ENCODE measurements at regions of chr22 and their contacts with region 1.

Region 1: GRCh38 chr22:39532215-39533071 is at the start of gene RPS19BP1:
- DNase-seq: peak; percentile 99 to 100 (median 99)
- ATAC-seq: peak; percentile 87 to 89
- H3K4me3 ChIP-seq: peak within 1 kb of the TSS; percentile 70
- H3K27ac ChIP-seq: peak within 1 kb of the TSS; percentile 79
- H3K4me1 ChIP-seq: peaks cover 7% of the 10 kb centered on the region
- H3K27me3 ChIP-seq: no peaks in the 10 kb centered on the region
- total RNA-seq, gene RPS19BP1: 55.1 to 75.5 (median 61.8) TPM

Region 2: GRCh38 chr22:39319270-39320022 is 213.0 kb before region 1 on chr22 and contains the start of gene RPL3:
- intact Hi-C with region 1: loop called in 1 of 4 experiments (anchors 5 kb)
- DNase-seq: peak; percentile 96 to 99 (median 99)
- ATAC-seq: peak; percentile 91 to 92
- H3K4me3 ChIP-seq: peak within 1 kb of the TSS; percentile 79
- H3K27ac ChIP-seq: peak within 1 kb of the TSS; percentile 99
- H3K4me1 ChIP-seq: peaks cover 11% of the 10 kb centered on the region
- H3K27me3 ChIP-seq: no peaks in the 10 kb centered on the region
- total RNA-seq, gene RPL3: 948 to 1,416 (median 984) TPM

Region 3: DNA sequence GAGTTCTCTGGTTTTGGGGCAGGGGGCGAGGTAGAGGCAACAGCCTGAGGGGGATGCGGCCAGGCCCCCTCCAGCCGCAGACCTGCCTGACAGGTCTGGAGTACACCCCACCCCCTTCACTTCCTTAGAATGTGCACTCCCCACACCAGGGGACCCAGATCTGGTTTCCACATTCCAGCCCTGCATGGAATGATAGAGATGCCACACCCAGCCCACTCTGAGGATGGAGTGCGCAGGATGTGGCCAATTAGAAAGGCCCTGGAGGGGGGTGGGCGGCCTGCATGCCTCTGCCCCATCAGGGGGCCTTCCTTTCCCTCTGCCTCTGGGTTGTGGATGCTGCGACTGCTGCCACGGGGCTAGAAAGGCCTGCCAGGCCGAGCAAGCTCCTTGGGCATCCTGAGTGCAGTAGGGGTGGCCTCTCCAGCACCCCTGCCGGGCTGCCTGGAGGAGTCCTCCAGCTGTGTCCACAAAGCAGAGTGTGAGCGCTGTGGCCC is 103.8 kb before region 1 on chr22:
- intact Hi-C with region 1: no loop called
- DNase-seq: no peak
- ATAC-seq: no peak
- H3K4me3 ChIP-seq: no peak overlapping the region
- H3K27ac ChIP-seq: no peak overlapping the region
- H3K4me1 ChIP-seq: peaks cover 9% of the 10 kb centered on the region
- H3K27me3 ChIP-seq: no peaks in the 10 kb centered on the region

Region 4: DNA sequence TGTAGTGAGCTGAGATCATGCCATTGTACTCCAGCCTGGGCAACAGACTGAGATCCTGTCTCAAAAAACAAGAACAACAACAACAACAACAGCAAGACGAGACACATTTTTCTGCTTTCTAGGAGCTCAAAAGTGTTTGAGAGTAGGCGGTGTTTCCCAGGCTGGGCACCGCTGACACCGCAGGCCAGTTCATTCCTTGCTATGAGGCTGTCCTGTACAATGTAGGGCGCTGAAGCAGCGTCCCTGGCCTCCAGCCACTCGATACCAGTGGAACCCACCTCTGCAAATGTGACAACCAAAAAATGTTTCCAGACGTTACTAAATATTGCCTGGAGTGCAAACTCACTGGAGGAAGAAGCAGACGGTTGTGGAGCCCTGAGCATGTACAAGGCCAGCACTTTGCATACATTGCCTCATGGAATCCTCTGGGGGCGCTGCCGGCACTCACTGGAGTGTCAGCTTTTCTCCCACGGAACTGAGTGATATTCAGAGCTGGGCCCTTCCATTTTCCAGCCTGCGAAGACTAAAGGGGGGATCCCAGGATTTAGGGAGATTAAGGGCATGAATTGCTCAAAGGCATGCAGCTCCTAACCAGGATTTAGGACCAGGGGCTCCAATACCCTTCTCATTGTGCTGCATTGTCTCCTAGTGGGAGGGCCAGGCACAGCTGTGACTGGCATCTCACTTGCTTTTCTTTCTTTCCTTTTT is 36.2 kb before region 1 on chr22:
- intact Hi-C with region 1: loop called in 2 of 4 experiments (anchors 5 kb)
- DNase-seq: peak; percentile 80 to 89 (median 88)
- ATAC-seq: peak; percentile 67 to 71
- H3K4me3 ChIP-seq: no peak overlapping the region
- H3K27ac ChIP-seq: peak overlapping the region; percentile 36
- H3K4me1 ChIP-seq: peaks cover 4% of the 10 kb centered on the region
- H3K27me3 ChIP-seq: no peaks in the 10 kb centered on the region

Region 5: GRCh38 chr22:40036591-40037225 is 504.3 kb after region 1 on chr22:
- intact Hi-C with region 1: loop called in 2 of 4 experiments (anchors 5 to 10 kb)
- DNase-seq: peak; percentile 46 to 76 (median 75)
- ATAC-seq: peak; percentile 57 to 67
- H3K4me3 ChIP-seq: no peak overlapping the region
- H3K27ac ChIP-seq: no peak overlapping the region
- H3K4me1 ChIP-seq: no peaks in the 10 kb centered on the region
- H3K27me3 ChIP-seq: no peaks in the 10 kb centered on the region

Region 6: DNA sequence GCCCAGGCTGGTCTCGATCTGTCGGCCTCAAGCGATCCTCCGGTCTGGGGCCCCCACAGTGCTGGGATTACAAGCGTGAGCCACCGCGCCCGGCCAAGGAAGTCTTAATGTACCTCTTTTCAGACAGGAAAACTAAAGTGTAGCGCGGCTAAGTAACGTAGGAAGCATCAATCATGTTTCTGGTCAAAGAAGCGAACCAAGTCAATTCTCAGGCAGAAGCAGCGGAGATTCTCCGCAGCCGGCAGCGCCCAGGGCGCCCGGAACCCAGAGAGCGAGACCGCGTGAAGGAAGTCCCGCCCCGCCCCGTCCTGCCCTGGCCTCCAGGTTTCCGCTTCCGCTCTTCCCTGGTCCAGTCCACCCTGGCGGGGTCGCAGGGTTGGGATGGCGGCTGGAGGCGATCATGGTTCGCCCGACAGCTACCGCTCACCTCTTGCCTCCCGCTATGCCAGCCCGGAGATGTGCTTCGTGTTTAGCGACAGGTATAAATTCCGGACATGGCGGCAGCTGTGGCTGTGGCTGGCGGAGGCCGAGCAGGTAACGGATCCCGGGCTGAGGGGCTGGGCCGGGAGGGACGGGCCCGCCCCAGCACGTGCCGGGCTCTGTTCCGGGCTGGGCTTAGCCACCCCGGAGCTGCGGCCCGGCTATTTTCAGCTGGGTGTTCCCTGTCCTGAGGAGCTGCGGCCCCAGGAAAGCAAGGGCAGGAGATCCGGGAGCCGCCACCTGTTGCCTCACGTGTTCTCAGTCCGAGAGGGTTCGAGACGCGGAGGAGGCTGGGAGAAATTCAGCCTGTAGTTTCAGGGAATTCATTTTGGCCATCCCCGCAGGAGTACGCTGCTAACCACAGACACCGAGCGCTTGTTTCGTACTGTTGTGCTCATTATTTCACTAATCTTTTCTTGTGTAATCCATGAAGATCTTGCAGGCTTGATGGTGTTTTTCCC is 814.0 kb after region 1 on chr22 and contains the start of gene ADSL:
- intact Hi-C with region 1: loop called in 2 of 4 experiments (anchors 5 kb)
- DNase-seq: peak; percentile 91 to 96 (median 95)
- ATAC-seq: peak; percentile 99
- H3K4me3 ChIP-seq: peak within 1 kb of the TSS; percentile 36
- H3K27ac ChIP-seq: peak within 1 kb of the TSS; percentile 65
- H3K4me1 ChIP-seq: no peaks in the 10 kb centered on the region
- H3K27me3 ChIP-seq: no peaks in the 10 kb centered on the region
- total RNA-seq, gene ADSL: 35.9 to 51.0 (median 39.9) TPM

Measured in right cardiac atrium (tissue), 5 donors.